Activated B cell treated with CpG ODN at 0.5 μM for 24 hours (primary cell): ENCODE measurements at regions of chrX and their contacts with region 1.

Region 1: GRCh38 chrX:153900831-153901752 is 3.4 kb upstream of the AVPR2 start:
- DNase-seq: peak; percentile 47
- ATAC-seq: peak; percentile 91
- H3K4me3 Mint-ChIP-seq: peak overlapping the region; percentile 72
- H3K27ac Mint-ChIP-seq: peak overlapping the region; percentile 83
- H3K4me1 Mint-ChIP-seq: peaks cover 44% of the 10 kb centered on the region
- H3K27me3 Mint-ChIP-seq: no peaks in the 10 kb centered on the region
- CTCF ChIP-seq: no peak

Region 2: DNA sequence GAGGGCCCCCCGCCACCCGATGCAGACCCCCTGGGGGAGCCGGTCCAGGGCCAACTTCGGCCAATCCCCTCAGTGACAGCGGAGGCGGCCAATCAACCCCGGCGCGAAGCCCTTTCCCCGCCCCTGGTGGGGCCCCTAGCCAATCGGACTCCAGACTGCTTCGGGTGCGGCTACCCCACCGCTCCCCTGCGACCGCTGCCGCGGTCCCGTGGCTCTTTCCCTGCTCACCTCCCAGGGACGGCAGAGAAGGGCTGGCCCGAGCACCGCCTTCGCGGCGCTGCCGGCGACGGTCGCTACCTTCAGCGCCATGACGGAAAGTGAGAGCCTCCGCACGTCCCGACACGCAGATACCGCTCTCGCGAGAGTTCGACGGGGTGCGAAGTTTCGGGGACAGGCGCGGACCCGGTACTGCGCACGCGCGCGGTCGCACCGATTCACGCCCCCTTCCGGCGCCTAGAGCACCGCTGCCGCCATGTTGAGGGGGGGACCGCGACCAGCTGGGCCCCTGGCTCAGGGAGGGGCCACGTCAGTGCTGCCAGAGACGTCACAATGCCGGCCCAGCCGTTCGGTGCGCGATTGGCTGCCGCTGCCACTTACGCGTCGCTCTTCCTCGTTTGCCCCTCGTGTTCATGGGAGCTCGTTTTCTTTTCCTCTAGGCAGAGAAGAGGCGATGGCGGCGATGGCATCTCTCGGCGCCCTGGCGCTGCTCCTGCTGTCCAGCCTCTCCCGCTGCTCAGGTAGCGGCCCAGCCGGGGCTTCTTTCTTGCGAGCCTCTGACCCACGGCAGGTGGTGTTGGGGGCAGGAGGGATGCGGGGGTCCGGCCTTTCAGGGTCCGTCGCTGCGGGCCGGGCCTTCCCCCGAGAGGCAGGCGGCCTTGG is 106.8 kb before region 1 on chrX and contains the starts of genes IDH3G and SSR4:
- CTCF ChIA-PET with region 1: no interaction called
- POLR2A ChIA-PET with region 1: interaction called, 8 read pairs
- intact Hi-C with region 1: loop called (anchors 1 kb)
- DNase-seq: peak; percentile 84
- ATAC-seq: peak; percentile 91
- H3K4me3 Mint-ChIP-seq: peak within 1 kb of the TSS; percentile 94
- H3K27ac Mint-ChIP-seq: peak within 1 kb of the TSS; percentile 92
- H3K4me1 Mint-ChIP-seq: peaks cover 19% of the 10 kb centered on the region
- H3K27me3 Mint-ChIP-seq: no peaks in the 10 kb centered on the region
- CTCF ChIP-seq: no peak
- total RNA-seq, gene IDH3G: 58.5 and 60.3 TPM in 2 replicates
- total RNA-seq, gene SSR4: 160 and 175 TPM in 2 replicates

Region 3: GRCh38 chrX:153875391-153876111 is 25.5 kb before region 1 on chrX:
- CTCF ChIA-PET with region 1: no interaction called
- POLR2A ChIA-PET with region 1: no interaction called
- intact Hi-C with region 1: loop called (anchors 1 kb)
- DNase-seq: peak; percentile 53
- ATAC-seq: peak; percentile 82
- H3K4me3 Mint-ChIP-seq: no peak overlapping the region
- H3K27ac Mint-ChIP-seq: no peak overlapping the region
- H3K4me1 Mint-ChIP-seq: peaks cover 16% of the 10 kb centered on the region
- H3K27me3 Mint-ChIP-seq: peaks cover 24% of the 10 kb centered on the region
- CTCF ChIP-seq: no peak

Region 4: GRCh38 chrX:153885968-153886903 is 14.9 kb before region 1 on chrX and contains the start of gene L1CAM:
- CTCF ChIA-PET with region 1: no interaction called
- POLR2A ChIA-PET with region 1: interaction called, 5 read pairs
- intact Hi-C with region 1: loop called (anchors 1 kb)
- DNase-seq: no peak
- ATAC-seq: peak; percentile 20
- H3K4me3 Mint-ChIP-seq: peak within 1 kb of the TSS; percentile 65
- H3K27ac Mint-ChIP-seq: peak within 1 kb of the TSS; percentile 35
- H3K4me1 Mint-ChIP-seq: peaks cover 29% of the 10 kb centered on the region
- H3K27me3 Mint-ChIP-seq: no peaks in the 10 kb centered on the region
- CTCF ChIP-seq: no peak
- total RNA-seq, gene L1CAM: 7.3 and 11.0 TPM in 2 replicates